ENCODE measurements at regions of chr6 and their contacts with region 1.

Region 1: GRCh38 chr6:142946181-142946923 is 1.4 kb upstream of the HIVEP2 start:
- DNase-seq: peak; percentile 99
- H3K4me3 Mint-ChIP-seq: peak overlapping the region; percentile 92
- H3K27ac Mint-ChIP-seq: peak overlapping the region; percentile 63
- H3K4me1 Mint-ChIP-seq: peaks cover 21% of the 10 kb centered on the region
- H3K27me3 Mint-ChIP-seq: no peaks in the 10 kb centered on the region
- CTCF ChIP-seq: no peak

Region 2: DNA sequence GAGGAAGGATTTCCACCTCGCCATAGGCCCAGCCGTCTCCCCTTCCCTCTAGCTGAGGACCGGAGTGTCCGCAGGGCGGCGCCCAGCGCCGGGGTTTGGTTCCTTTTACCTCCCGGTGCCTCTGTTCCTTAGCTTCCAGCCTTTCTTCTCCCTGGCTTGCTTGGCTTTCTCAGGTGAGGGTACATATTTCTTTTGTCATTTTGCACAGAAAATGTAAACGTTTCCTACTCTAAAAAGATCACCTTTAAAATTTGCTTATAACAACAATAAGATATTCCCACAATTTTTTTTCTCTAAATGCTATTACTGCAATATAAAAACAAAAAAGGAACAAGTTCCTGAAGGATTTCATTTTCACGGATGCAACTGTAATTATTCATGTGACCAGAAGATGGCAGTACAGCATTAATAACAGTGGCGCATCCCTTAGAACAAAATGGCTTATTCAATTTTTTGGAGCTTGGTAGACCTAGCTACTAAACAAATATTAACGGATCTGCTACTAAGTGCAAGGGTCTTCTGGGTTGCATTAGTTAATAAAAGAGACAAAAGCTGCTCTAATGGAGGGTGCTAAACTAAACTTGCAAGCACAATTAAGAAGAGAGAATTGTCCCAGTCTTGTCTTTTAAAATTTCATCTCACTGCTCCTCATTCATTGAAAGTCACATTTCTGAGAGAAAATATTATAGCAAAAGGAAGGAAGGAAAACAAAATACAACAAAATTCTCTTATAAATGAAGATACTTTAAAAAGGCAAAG is 471.6 kb before region 1 on chr6:
- CTCF ChIA-PET with region 1: interaction called, 3 read pairs
- POLR2A ChIA-PET with region 1: no interaction called
- intact Hi-C with region 1: loop called (anchors 1 kb)
- DNase-seq: peak; percentile 72
- H3K4me3 Mint-ChIP-seq: no peak overlapping the region
- H3K27ac Mint-ChIP-seq: no peak overlapping the region
- H3K4me1 Mint-ChIP-seq: peaks cover 7% of the 10 kb centered on the region
- H3K27me3 Mint-ChIP-seq: peaks cover 5% of the 10 kb centered on the region
- CTCF ChIP-seq: peak; percentile 66

Region 3: GRCh38 chr6:142802124-142802523 is 144.2 kb before region 1 on chr6:
- CTCF ChIA-PET with region 1: interaction called, 4 read pairs
- POLR2A ChIA-PET with region 1: interaction called, 4 read pairs
- intact Hi-C with region 1: loop called (anchors 1 kb)
- DNase-seq: peak; percentile 96
- H3K4me3 Mint-ChIP-seq: no peak overlapping the region
- H3K27ac Mint-ChIP-seq: peak overlapping the region; percentile 75
- H3K4me1 Mint-ChIP-seq: peaks cover 10% of the 10 kb centered on the region
- H3K27me3 Mint-ChIP-seq: no peaks in the 10 kb centered on the region
- CTCF ChIP-seq: no peak

Region 4: DNA sequence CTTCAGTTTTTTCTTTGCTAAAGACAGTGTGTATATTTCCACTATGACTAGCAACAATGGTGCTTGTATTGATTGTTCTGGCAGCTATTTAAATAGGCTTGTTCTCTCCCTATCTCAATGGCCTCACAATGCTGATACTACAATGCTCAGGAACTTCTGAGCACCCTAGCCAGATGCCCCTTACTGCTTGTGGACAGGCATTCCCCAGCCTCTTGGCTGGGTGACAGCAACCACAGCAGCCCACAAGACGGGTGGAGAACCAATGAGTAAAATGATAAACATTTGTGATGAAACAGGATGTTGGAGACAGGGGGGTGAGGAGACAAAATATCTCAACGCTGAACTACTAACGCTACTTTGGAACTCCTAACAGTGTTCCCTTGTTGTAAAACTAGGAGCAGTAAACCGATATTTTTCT is 43.7 kb before region 1 on chr6:
- CTCF ChIA-PET with region 1: no interaction called
- POLR2A ChIA-PET with region 1: interaction called, 4 read pairs
- intact Hi-C with region 1: loop called (anchors 1 kb)
- DNase-seq: peak; percentile 94
- H3K4me3 Mint-ChIP-seq: peak overlapping the region; percentile 41
- H3K27ac Mint-ChIP-seq: peak overlapping the region; percentile 91
- H3K4me1 Mint-ChIP-seq: peaks cover 33% of the 10 kb centered on the region
- H3K27me3 Mint-ChIP-seq: no peaks in the 10 kb centered on the region
- CTCF ChIP-seq: no peak

Region 5: GRCh38 chr6:143232849-143233248 is 286.5 kb after region 1 on chr6:
- CTCF ChIA-PET with region 1: no interaction called
- POLR2A ChIA-PET with region 1: no interaction called
- intact Hi-C with region 1: loop called (anchors 10 kb)
- DNase-seq: peak; percentile 70
- H3K4me3 Mint-ChIP-seq: no peak overlapping the region
- H3K27ac Mint-ChIP-seq: peak overlapping the region; percentile 33
- H3K4me1 Mint-ChIP-seq: peaks cover 7% of the 10 kb centered on the region
- H3K27me3 Mint-ChIP-seq: no peaks in the 10 kb centered on the region
- CTCF ChIP-seq: peak; percentile 55

Region 6: DNA sequence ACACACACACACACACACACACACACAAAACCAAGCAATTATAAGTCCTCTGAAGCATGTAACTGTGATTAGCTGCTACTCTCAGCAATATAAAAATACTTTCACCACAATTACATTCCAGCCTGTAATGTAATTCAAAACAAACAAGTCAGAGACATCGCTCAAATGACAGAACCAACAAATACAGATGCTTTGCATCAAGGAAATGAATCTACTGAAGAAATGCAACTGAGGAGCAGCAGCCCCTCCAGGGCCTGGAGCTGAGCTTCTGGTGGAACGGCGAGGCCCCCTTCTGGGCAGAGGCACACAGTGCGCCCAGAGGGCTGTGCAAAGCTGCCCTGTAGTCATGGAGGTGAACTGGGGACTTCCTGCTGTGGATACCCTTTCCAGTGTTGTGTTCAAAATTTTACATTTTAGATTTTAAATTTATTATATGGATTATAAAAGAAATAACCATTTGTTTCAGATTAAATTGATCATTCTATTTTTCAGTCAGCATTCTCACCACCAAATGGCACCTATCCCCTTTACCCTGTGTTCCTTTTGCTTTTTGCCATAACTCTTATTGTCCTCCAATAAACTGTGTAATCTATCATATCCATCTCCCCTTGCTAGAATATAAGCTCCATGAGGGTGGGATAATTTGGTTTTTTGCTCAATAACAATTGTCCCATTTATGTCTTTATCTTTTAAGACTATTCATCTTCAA is 480.9 kb after region 1 on chr6:
- CTCF ChIA-PET with region 1: interaction called, 3 read pairs
- POLR2A ChIA-PET with region 1: interaction called, 15 read pairs
- intact Hi-C with region 1: loop called (anchors 1 kb)
- DNase-seq: peak; percentile 78
- H3K4me3 Mint-ChIP-seq: no peak overlapping the region
- H3K27ac Mint-ChIP-seq: peak overlapping the region; percentile 84
- H3K4me1 Mint-ChIP-seq: peaks cover 11% of the 10 kb centered on the region
- H3K27me3 Mint-ChIP-seq: no peaks in the 10 kb centered on the region
- CTCF ChIP-seq: peak; percentile 98